SK-N-SH (cell line): ENCODE measurements at regions of chr17 and their contacts with region 1.

Region 1: GRCh38 chr17:49997791-49998703 is 3.0 kb upstream of the DLX3 start:
- DNase-seq: peak; percentile 92
- H3K4me3 ChIP-seq: peak overlapping the region in 1 of 2 experiments; percentile 3; a peak in 2 of 4 replicates
- H3K27ac ChIP-seq: no peak overlapping the region
- H3K4me1 ChIP-seq: peaks cover 6 to 12% of the 10 kb centered on the region in 2 experiments; a peak in 1 of 4 replicates
- H3K27me3 ChIP-seq: peaks cover 76% of the 10 kb centered on the region
- CTCF ChIP-seq: peak; percentile 99
- EP300 ChIP-seq: no peak
- RAD21 ChIP-seq: peak; percentile 99

Region 2: GRCh38 chr17:49707608-49708514 is 290.2 kb before region 1 on chr17 and contains the start of gene SLC35B1:
- CTCF ChIA-PET with region 1: interaction called, 15 read pairs
- POLR2A ChIA-PET with region 1: no interaction called
- DNase-seq: peak; percentile 99
- H3K4me3 ChIP-seq: peak within 1 kb of the TSS; percentile 85 to 97
- H3K27ac ChIP-seq: peak within 1 kb of the TSS; percentile 80 to 99
- H3K4me1 ChIP-seq: peaks cover 8 to 17% of the 10 kb centered on the region in 2 experiments; a peak in 2 of 4 replicates
- H3K27me3 ChIP-seq: no peaks in the 10 kb centered on the region
- CTCF ChIP-seq: peak; percentile 99
- EP300 ChIP-seq: peak in 1 of 2 experiments; percentile 36; a peak in 1 of 4 replicates
- RAD21 ChIP-seq: peak; percentile 69
- polyA plus RNA-seq, gene SLC35B1: 89.8 and 109 TPM in 2 replicates

Region 3: DNA sequence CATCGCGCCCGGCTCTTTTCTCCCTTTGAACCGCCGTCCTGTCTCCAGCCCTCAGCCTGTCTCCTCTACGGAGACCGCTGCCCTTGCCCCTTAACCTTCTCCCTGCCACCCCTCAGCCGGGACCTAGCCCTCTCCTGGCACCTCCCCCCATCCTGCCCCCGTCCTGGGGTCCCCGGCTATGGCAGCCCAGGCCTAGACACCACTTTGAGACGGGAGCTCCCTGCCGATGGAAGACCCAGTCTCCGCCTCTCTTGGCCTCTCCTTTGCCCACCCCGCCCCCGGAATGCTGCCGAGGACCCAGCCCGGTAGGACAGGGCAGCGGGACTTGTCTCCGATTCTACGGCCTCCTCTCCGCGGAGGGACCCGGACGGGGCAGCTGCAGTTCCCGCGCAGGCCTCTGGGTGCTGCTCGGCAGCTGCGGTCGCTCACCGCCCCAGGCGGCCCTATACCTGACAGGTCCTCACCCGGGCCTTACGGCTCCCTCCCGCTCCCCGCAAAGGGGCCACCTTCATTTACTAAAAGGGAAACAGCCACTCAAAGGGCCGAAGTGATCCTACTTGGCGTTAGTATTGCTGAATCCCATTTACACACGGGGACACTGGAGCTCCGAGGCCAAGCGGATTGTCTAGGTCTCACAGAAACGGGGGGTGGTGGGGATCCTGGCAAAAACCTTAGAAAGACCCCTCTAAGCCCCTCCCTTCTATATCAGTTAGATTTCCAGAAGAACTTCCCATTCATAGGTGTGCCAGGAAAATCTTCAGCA is 117.6 kb before region 1 on chr17:
- CTCF ChIA-PET with region 1: interaction called, 1,665 read pairs
- POLR2A ChIA-PET with region 1: interaction called, 3 read pairs
- DNase-seq: peak; percentile 97
- H3K4me3 ChIP-seq: peak overlapping the region in 1 of 2 experiments; percentile 13; a peak in 2 of 4 replicates
- H3K27ac ChIP-seq: no peak overlapping the region
- H3K4me1 ChIP-seq: peaks cover 0 to 9% of the 10 kb centered on the region in 2 experiments; a peak in 1 of 4 replicates
- H3K27me3 ChIP-seq: peaks cover 78% of the 10 kb centered on the region
- CTCF ChIP-seq: peak; percentile 96
- EP300 ChIP-seq: no peak
- RAD21 ChIP-seq: peak; percentile 86

Region 4: DNA sequence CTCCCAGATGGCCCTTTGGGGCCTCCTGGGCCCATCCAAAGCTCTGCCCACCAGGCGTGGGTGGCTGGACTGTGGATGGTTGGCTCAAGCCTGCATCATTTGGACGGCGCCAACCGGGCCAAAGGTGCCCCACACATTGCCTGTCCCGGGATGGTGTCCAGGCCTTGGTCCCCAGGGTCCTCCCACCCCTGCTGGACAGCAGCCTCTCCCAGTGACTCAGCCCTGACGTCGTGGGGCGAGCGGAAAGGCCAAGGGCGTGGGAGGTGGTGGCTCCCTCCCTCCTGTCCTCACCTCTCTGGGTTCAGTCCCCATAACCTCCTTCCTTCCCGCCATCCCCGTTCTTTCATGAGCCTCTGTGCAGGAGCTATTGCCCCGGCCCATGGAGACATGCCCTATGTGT is 71.2 kb before region 1 on chr17:
- CTCF ChIA-PET with region 1: interaction called, 145 read pairs
- POLR2A ChIA-PET with region 1: no interaction called
- DNase-seq: no peak
- H3K4me3 ChIP-seq: no peak overlapping the region
- H3K27ac ChIP-seq: no peak overlapping the region
- H3K4me1 ChIP-seq: peaks cover 0 to 1% of the 10 kb centered on the region in 2 experiments; a peak in 1 of 4 replicates
- H3K27me3 ChIP-seq: peaks cover 96% of the 10 kb centered on the region
- CTCF ChIP-seq: no peak
- EP300 ChIP-seq: no peak
- RAD21 ChIP-seq: no peak

Region 5: DNA sequence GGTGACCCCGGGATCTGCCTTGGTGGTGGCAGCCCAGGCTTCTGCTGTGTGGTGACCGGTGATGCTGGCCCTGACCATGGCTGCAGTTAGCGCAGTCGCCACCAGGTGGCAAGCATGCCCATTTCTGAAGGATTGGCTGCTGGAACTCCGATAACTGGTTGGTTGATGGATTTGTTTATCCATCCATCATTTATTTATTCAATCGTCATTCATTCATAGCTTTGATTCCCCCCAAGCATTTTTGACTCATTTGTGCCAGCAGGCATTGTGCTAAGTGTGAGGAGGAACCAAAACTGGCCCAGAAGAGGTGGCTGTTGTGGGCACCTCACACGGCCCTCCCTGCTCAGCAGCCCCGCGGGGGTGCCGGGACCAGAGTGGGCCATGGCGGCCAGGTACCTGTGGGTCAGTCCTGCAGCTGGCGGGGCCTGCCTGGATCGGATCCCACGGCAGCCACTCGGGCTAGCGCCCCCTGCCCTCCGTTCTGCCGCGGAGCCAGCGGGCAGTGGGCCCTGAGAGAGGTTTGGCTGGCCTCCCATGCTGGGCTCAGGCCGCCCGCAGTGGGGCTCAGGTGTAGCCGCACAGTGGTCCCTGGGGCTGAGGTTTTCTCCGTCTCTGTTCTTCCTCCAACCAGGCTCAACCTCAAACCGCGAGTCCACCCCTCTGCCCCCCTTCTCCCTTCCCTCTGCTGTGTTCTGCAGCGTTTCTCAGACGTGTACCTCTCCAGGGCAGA is 29.0 kb after region 1 on chr17:
- CTCF ChIA-PET with region 1: interaction called, 39 read pairs
- POLR2A ChIA-PET with region 1: no interaction called
- DNase-seq: peak; percentile 93
- H3K4me3 ChIP-seq: peak overlapping the region; percentile 46 to 71
- H3K27ac ChIP-seq: peak overlapping the region; percentile 74 to 99; a peak in 3 of 4 replicates
- H3K4me1 ChIP-seq: peaks cover 16 to 21% of the 10 kb centered on the region in 2 experiments; a peak in 3 of 4 replicates
- H3K27me3 ChIP-seq: no peaks in the 10 kb centered on the region
- CTCF ChIP-seq: peak; percentile 100
- EP300 ChIP-seq: no peak; a peak in 1 of 4 replicates
- RAD21 ChIP-seq: peak; percentile 95

Region 6: DNA sequence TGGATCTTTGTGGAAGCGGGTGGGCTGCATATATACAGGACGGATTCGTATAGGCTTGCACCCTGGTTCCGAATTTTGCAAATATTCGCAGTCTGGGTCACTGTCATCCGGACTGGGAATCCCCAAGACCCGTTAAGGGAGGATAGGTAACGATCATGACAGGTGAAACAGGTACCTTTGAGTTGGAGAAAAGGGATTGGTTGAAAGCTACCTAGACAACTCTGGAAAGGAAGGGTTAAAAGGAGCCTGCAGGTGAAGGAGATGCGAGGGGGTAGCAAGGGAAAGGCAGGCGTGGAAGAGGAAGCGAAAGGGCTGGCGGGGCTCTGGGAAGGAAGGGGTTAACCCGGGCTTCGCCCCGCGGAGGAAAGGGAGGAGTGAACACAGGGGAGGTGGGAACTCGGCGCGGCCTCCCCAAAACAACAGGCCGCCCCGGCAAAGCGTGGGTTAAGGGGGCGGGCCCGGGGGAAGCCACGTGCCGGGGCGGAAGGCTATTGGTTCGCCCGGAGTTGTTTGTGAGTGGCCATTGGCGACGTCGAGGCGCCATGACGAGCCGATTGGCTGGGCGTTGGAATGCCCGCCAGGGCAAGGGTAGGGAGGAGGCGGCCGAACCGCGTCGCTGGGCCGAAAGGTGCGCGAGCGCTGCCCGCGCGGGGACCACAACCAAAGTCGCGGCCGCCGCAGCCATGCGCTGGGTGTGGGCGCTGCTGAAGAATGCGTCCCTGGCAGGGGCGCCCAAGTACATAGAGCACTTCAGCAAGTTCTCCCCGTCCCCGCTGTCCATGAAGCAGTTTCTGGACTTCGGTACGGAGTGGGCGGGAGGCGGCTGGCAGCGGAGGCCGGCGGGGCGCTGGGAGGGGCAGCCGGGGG is 96.9 kb after region 1 on chr17 and contains the start of gene PDK2:
- CTCF ChIA-PET with region 1: interaction called, 66 read pairs
- POLR2A ChIA-PET with region 1: no interaction called
- DNase-seq: peak; percentile 100
- H3K4me3 ChIP-seq: peak within 1 kb of the TSS; percentile 75 to 84
- H3K27ac ChIP-seq: peak within 1 kb of the TSS; percentile 64 to 83
- H3K4me1 ChIP-seq: peaks cover 3 to 18% of the 10 kb centered on the region in 2 experiments; a peak in 1 of 4 replicates
- H3K27me3 ChIP-seq: no peaks in the 10 kb centered on the region
- CTCF ChIP-seq: no peak
- EP300 ChIP-seq: peak in 1 of 2 experiments; percentile 5; a peak in 1 of 4 replicates
- RAD21 ChIP-seq: no peak
- polyA plus RNA-seq, gene PDK2: 96.1 and 124 TPM in 2 replicates

Region 7: GRCh38 chr17:50258647-50259476 is 260.8 kb after region 1 on chr17:
- CTCF ChIA-PET with region 1: no interaction called
- POLR2A ChIA-PET with region 1: no interaction called
- DNase-seq: peak; percentile 85
- H3K4me3 ChIP-seq: no peak overlapping the region
- H3K27ac ChIP-seq: peak overlapping the region; percentile 3 to 44; a peak in 3 of 4 replicates
- H3K4me1 ChIP-seq: peaks cover 9 to 23% of the 10 kb centered on the region in 2 experiments; a peak in 3 of 4 replicates
- H3K27me3 ChIP-seq: no peaks in the 10 kb centered on the region
- CTCF ChIP-seq: 0 out of 2 replicates have a peak, but pooled peaks have one; percentile 10
- EP300 ChIP-seq: peak in 1 of 2 experiments; percentile 70; a peak in 1 of 4 replicates
- RAD21 ChIP-seq: no peak